SK-N-SH (cell line): ENCODE measurements at regions of chr3 and their contacts with region 1.

Region 1: GRCh38 chr3:182920515-182921084 is 59.7 kb downstream of the DCUN1D1 start:
- DNase-seq: no peak
- H3K4me3 ChIP-seq: no peak overlapping the region
- H3K27ac ChIP-seq: no peak overlapping the region
- H3K4me1 ChIP-seq: peaks cover 0 to 5% of the 10 kb centered on the region in 2 experiments; a peak in 2 of 4 replicates
- H3K27me3 ChIP-seq: no peaks in the 10 kb centered on the region
- CTCF ChIP-seq: no peak
- EP300 ChIP-seq: no peak
- RAD21 ChIP-seq: no peak

Region 2: DNA sequence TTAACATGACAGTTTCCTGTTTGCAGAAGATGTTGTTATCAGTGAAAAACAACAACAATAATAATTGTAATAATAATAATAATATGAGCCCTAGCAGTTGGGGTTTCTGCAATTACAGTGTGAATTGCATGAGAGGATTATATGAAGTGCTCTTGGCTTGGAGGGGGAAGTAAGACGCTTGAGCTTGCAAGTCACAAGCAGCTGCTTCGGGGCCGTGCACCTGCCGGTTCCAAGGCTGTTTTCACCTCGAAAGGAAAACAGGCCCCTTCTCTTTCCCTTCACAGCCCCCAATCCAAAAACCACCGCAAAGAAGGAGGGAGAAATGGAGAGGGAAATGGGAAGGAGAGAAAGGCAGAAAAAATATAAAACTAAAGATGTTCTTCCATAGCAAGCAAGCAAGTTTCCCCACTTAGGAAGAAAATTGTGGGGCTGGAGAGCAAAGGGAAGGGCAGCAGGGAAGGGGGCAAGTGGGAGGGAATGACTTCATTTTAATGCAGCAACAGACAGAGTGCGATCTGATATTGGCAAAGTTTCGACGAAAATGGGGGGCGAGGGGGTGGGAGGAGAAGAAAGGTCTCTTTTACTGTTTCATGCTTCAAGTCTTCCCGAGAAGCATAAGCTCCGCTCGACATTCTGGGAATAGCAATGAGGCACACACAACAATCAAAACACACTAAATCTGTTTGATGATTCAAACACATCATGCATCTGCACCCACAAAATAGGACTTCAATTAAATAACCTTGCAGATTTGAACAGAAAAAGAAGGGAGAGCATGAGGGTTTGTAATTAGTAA is 411.5 kb before region 1 on chr3:
- CTCF ChIA-PET with region 1: no interaction called
- POLR2A ChIA-PET with region 1: no interaction called
- DNase-seq: no peak
- H3K4me3 ChIP-seq: no peak overlapping the region
- H3K27ac ChIP-seq: no peak overlapping the region
- H3K4me1 ChIP-seq: no peaks in the 10 kb centered on the region
- H3K27me3 ChIP-seq: no peaks in the 10 kb centered on the region
- CTCF ChIP-seq: no peak
- EP300 ChIP-seq: no peak
- RAD21 ChIP-seq: no peak

Region 3: GRCh38 chr3:182909318-182910040 is 11.1 kb before region 1 on chr3:
- CTCF ChIA-PET with region 1: interaction called, 24 read pairs
- POLR2A ChIA-PET with region 1: no interaction called
- DNase-seq: peak; percentile 33
- H3K4me3 ChIP-seq: no peak overlapping the region; a peak in 1 of 4 replicates
- H3K27ac ChIP-seq: no peak overlapping the region
- H3K4me1 ChIP-seq: peaks cover 0 to 4% of the 10 kb centered on the region in 2 experiments; a peak in 2 of 4 replicates
- H3K27me3 ChIP-seq: no peaks in the 10 kb centered on the region
- CTCF ChIP-seq: peak; percentile 71
- EP300 ChIP-seq: no peak
- RAD21 ChIP-seq: peak; percentile 60

Region 4: GRCh38 chr3:183061431-183062172 is 141.0 kb after region 1 on chr3:
- CTCF ChIA-PET with region 1: no interaction called
- POLR2A ChIA-PET with region 1: no interaction called
- DNase-seq: no peak
- H3K4me3 ChIP-seq: no peak overlapping the region
- H3K27ac ChIP-seq: no peak overlapping the region
- H3K4me1 ChIP-seq: no peaks in the 10 kb centered on the region
- H3K27me3 ChIP-seq: no peaks in the 10 kb centered on the region
- CTCF ChIP-seq: no peak
- EP300 ChIP-seq: no peak
- RAD21 ChIP-seq: no peak